Activated CD4-positive, alpha-beta T cell treated with anti-CD3 and anti-CD28 coated beads for 36 hours (primary cell): ENCODE measurements at regions of chr7 and their contacts with region 1.

Region 1: GRCh38 chr7:55365675-55366460 is 731 bp downstream of the LANCL2 start:
- DNase-seq: peak; percentile 96
- ATAC-seq: peak; percentile 88
- H3K4me3 Mint-ChIP-seq: peak overlapping the region; percentile 94
- H3K27ac Mint-ChIP-seq: peak overlapping the region; percentile 97
- H3K4me1 Mint-ChIP-seq: peaks cover 25% of the 10 kb centered on the region
- H3K27me3 Mint-ChIP-seq: no peaks in the 10 kb centered on the region

Region 2: DNA sequence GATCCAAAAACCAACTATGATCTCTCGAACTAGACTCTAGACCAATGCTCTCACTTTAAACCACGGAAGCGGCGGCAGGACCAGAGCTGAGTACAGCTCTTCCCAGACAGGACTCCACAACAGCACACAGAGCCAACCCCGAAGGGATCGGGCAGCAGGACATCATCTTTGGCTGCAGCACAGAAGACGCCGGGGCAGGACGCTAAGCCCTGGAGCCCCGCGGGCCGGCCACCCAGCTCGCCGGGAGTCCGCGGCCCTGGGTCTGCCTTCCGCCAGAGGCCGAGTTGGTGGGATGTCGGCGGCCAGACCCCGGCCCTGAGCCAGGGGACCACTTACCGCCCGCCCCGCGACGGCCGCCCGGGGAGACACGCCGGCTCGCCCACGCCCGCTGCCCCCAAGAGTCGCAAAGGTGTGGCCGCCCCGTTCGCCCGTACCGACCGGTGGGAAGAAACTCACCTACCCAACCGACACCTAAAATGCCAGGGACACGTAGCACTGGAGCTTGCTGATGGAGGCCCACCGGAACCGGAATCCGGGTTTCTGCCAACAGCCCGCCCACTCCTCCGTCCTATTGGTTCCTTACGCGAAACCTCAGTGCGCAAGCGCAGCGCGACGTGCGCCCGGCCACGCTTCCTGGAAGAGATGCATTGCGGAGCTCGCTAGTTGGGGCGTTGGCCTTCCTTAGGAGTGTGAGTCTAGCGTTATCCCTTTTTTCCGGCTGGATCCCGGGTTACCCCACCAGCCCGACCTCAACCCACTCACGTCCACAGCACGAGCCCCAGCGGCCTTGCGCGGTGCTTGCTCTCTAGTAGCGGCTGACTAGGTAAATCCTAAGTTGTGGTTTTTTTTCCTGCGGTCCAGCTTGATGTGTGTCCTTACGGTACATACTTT is 606.9 kb before region 1 on chr7 and contains the start of gene SEC61G:
- CTCF ChIA-PET with region 1: no interaction called
- POLR2A ChIA-PET with region 1: interaction called, 6 read pairs
- intact Hi-C with region 1: loop called (anchors 1 kb)
- DNase-seq: peak; percentile 97
- ATAC-seq: peak; percentile 91
- H3K4me3 Mint-ChIP-seq: peak within 1 kb of the TSS; percentile 91
- H3K27ac Mint-ChIP-seq: peak within 1 kb of the TSS; percentile 95
- H3K4me1 Mint-ChIP-seq: peaks cover 20% of the 10 kb centered on the region
- H3K27me3 Mint-ChIP-seq: peaks cover 2% of the 10 kb centered on the region
- total RNA-seq, gene SEC61G: 78.4 to 191 TPM

Region 3: GRCh38 chr7:54921116-54921515 is 444.8 kb before region 1 on chr7:
- CTCF ChIA-PET with region 1: no interaction called
- POLR2A ChIA-PET with region 1: no interaction called
- intact Hi-C with region 1: no loop called
- DNase-seq: no peak
- ATAC-seq: no peak
- H3K4me3 Mint-ChIP-seq: no peak overlapping the region
- H3K27ac Mint-ChIP-seq: no peak overlapping the region
- H3K4me1 Mint-ChIP-seq: no peaks in the 10 kb centered on the region
- H3K27me3 Mint-ChIP-seq: peaks cover 15% of the 10 kb centered on the region

Region 4: GRCh38 chr7:55255496-55256435 is 110.1 kb before region 1 on chr7:
- CTCF ChIA-PET with region 1: no interaction called
- POLR2A ChIA-PET with region 1: no interaction called
- intact Hi-C with region 1: loop called in 1 of 2 experiments (anchors 1 kb)
- DNase-seq: peak; percentile 87
- ATAC-seq: peak; percentile 94
- H3K4me3 Mint-ChIP-seq: peak overlapping the region; percentile 75
- H3K27ac Mint-ChIP-seq: peak overlapping the region; percentile 49
- H3K4me1 Mint-ChIP-seq: peaks cover 6% of the 10 kb centered on the region
- H3K27me3 Mint-ChIP-seq: peaks cover 50% of the 10 kb centered on the region

Region 5: DNA sequence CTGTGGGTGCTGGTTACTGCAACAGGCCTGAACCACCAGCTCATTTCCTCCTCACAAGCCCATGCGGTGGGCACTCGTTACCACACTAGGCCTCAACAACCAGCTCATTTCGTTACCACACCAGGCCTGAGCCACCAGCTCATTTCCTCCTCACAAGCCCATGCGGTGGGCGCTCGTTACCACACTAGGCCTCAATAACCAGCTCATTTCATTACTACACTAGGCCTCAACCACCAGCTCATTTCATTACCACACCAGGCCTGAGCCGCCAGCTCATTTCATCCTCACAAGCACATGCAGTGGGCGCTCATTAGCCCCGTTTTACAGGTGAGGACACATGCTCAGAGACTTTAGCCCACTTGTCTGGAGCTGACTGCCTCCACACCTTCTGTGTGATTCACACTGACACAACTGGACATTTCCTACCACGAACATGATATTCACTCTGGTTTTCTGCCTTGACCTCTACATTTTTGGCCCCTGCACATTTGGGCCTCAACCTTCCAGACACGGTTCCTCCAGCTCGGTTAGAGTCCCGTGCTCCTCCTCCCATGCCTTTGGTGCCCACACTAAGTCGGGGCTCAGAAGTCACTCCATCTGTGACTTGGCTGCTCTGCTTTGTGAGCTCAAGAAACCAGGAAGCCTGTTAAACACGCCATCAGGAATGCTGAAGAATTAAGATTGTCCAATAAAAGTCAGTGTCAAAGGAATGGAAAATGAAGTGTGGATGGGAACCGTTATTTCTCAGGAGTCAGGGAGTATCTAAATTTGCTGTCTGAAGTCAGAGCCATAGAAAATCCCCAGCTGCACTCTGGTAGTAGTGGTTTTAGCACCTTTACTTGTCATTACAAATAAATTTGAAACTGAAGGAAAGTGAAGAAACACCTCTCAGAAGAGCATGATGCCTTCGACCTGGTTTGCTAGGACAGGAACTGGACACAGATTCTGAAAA is 56.6 kb before region 1 on chr7:
- CTCF ChIA-PET with region 1: interaction called, 3 read pairs
- POLR2A ChIA-PET with region 1: no interaction called
- intact Hi-C with region 1: loop called (anchors 1 to 5 kb)
- DNase-seq: peak; percentile 91
- ATAC-seq: peak; percentile 88
- H3K4me3 Mint-ChIP-seq: no peak overlapping the region
- H3K27ac Mint-ChIP-seq: peak overlapping the region; percentile 84
- H3K4me1 Mint-ChIP-seq: peaks cover 22% of the 10 kb centered on the region
- H3K27me3 Mint-ChIP-seq: peaks cover 12% of the 10 kb centered on the region

Region 6: GRCh38 chr7:55415173-55415778 is 49.4 kb after region 1 on chr7:
- CTCF ChIA-PET with region 1: interaction called, 3 read pairs
- POLR2A ChIA-PET with region 1: no interaction called
- intact Hi-C with region 1: loop called in 1 of 2 experiments (anchors 5 kb)
- DNase-seq: peak; percentile 92
- ATAC-seq: peak; percentile 93
- H3K4me3 Mint-ChIP-seq: no peak overlapping the region
- H3K27ac Mint-ChIP-seq: no peak overlapping the region
- H3K4me1 Mint-ChIP-seq: peaks cover 2% of the 10 kb centered on the region
- H3K27me3 Mint-ChIP-seq: no peaks in the 10 kb centered on the region

Region 7: DNA sequence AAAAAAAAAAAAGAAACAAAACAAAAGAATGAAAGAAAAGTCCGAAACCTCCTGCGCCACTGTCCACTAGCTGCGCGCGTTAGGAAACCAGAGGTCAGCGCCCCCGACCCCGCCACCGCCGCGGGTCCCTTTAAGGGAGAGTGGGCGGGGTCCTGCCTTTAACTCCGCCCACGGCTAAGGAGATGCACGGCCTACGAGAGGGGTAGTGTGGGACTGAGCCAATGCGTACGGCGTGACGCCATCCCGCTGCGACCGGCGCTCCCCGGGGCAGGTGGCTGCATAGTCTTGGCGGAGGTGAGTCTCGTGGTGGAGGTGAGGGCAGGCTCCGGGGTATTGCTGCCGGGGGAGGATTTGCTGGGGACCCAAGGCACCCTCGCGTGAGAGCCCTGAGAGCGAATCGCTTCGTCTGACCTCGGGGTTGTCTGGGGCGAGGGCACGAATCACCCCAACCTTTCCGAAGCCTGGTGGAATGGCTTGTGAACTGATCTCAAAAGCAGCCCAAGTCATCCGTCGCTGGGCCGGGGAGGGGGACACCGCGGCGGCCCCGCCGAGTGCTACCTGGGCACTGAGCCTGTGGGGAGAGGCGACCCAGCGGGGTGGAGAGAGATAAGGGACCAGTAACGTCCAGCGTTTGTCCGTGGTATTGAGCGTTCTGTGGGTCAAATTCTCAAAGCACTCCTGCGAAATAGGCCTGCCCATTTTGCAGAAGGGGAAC is 585.9 kb after region 1 on chr7 and contains the start of gene MRPS17:
- CTCF ChIA-PET with region 1: no interaction called
- POLR2A ChIA-PET with region 1: no interaction called
- intact Hi-C with region 1: loop called in 1 of 2 experiments (anchors 1 kb)
- DNase-seq: peak; percentile 96
- ATAC-seq: peak; percentile 100
- H3K4me3 Mint-ChIP-seq: peak within 1 kb of the TSS; percentile 98
- H3K27ac Mint-ChIP-seq: peak within 1 kb of the TSS; percentile 97
- H3K4me1 Mint-ChIP-seq: peaks cover 16% of the 10 kb centered on the region
- H3K27me3 Mint-ChIP-seq: peaks cover 2% of the 10 kb centered on the region
- total RNA-seq, gene MRPS17: 16.6 to 26.8 TPM

Region 8: DNA sequence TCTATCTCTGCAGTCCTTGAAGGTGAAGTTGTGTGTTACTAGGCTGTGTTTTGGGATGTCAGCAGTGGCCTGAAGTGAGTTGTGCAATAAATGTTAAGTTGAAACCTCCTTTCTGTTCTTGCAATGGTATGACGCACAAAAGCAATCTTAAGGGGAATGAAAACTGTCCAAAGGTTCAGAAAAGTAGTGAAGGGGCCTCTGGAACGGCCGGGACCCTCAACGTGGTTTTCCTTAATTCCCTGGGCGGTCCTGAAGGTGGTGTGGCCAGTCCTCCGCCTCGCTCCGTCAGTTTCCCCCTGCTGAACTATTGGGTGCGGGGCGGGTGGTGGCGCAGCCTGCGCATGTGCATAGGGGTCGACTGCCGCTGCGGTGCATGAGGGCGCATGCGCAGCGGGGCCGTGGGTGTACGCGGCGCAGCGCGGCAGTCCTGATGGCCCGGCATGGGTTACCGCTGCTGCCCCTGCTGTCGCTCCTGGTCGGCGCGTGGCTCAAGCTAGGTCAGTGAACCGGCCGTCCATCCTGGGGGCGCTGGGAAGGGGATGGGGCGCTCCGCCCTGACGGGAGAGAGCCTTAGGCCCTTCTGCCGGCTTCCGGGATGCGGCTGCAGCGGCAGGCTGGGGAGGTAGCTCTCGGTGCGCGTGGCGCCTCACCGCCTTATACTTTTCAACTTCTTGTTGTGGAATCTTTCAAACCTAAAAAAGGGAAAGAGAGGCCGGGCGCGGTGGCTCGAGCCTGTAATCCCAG is 698.2 kb after region 1 on chr7 and contains the start of gene SUMF2:
- CTCF ChIA-PET with region 1: no interaction called
- POLR2A ChIA-PET with region 1: no interaction called
- intact Hi-C with region 1: loop called in 1 of 2 experiments (anchors 2 kb)
- DNase-seq: peak; percentile 93
- ATAC-seq: peak; percentile 91
- H3K4me3 Mint-ChIP-seq: peak within 1 kb of the TSS; percentile 91
- H3K27ac Mint-ChIP-seq: peak within 1 kb of the TSS; percentile 91
- H3K4me1 Mint-ChIP-seq: peaks cover 45% of the 10 kb centered on the region
- H3K27me3 Mint-ChIP-seq: no peaks in the 10 kb centered on the region
- total RNA-seq, gene SUMF2: 117 to 128 TPM

Region 9: DNA sequence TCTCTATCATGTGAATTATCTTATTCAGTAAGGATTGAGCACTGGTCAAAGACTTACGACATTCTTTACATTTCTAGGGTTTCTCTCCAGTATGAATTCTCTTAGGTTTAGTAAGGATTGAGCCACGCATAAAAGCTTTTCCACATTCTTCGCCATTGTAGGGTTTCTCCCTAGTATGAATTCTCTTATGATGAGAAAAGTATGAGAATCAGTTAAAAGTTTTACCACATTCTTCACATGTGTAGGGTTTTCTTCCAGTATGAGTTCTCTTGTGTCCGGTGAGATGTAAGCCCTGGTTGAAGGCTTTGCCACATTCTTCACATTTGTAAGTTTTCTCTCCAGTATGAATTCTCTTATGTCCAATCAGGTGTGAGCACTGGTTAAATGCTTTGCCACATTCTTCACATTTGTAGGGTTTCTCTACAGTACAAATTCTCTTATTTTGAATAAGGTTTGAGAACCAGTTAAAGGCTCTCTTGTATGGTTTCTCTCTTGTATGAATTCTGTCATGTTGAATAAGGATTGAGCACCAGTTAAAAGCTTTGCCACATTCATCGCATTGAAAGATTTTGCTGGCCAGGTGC is 1320.5 kb after region 1 on chr7:
- CTCF ChIA-PET with region 1: no interaction called
- POLR2A ChIA-PET with region 1: no interaction called
- intact Hi-C with region 1: no loop called
- DNase-seq: no peak
- ATAC-seq: no peak
- H3K4me3 Mint-ChIP-seq: no peak overlapping the region
- H3K27ac Mint-ChIP-seq: no peak overlapping the region
- H3K4me1 Mint-ChIP-seq: no peaks in the 10 kb centered on the region
- H3K27me3 Mint-ChIP-seq: no peaks in the 10 kb centered on the region